Mammary epithelial cell (primary cell): ENCODE measurements at regions of chr5 and their contacts with region 1.

Region 1: DNA sequence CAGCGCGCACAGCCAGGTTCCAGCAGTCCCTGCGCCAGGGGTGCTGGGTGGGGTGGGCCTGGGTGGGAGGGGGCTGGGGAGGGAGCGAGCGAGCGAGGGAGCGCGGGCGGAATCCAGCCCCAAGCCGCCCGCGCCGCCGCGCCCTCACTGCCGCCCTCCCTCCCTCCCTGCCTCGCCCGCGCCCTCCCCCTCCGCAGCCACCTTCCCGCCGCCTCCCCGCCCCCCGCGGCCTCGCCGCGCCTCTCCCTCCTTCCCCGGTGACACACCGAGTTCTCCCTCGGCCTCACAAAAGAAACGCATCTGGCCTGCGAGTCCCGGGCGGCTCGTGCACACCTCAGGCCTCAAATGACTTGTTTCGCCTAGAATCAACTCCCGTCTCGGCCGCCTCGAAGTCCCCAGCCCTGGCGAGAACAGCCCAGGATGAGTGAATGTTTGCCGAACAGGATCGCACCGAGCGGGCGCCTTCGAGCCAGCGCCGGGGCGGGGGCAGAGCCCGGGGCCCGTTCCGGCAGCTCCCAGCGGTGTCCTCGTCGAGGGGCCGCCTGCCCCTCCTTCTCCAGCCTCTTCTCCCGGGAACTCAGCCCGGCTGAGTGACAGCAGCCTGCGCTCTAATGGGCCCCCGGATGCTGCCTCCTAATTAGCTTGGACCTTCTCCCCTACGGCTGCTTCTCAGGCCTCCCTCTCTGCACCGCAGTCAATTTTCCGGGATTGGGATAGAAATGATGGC is 371 bp upstream of the PITX1 start:
- DNase-seq: peak; percentile 60
- H3K4me3 ChIP-seq: peak overlapping the region in 2 of 3 experiments; percentile 58 to 65
- H3K27ac ChIP-seq: no peak overlapping the region
- H3K4me1 ChIP-seq: peaks cover 11% of the 10 kb centered on the region
- H3K27me3 ChIP-seq: peaks cover 24% of the 10 kb centered on the region
- CTCF ChIP-seq: no peak

Region 2: GRCh38 chr5:135191084-135191826 is 156.9 kb after region 1 on chr5:
- CTCF ChIA-PET with region 1: interaction called, 4 read pairs
- dilution Hi-C with region 1: no loop called
- in situ Hi-C with region 1: loop called in 1 of 2 experiments (anchors 25 kb)
- intact Hi-C with region 1: loop called (anchors 1 kb)
- DNase-seq: peak; percentile 63
- H3K4me3 ChIP-seq: peak overlapping the region in 2 of 3 experiments; percentile 35 to 54
- H3K27ac ChIP-seq: no peak overlapping the region
- H3K4me1 ChIP-seq: peaks cover 6% of the 10 kb centered on the region
- H3K27me3 ChIP-seq: no peaks in the 10 kb centered on the region
- CTCF ChIP-seq: peak; percentile 94 to 98